ENCODE measurements at regions of chr13 and their contacts with region 1.

Region 1: DNA sequence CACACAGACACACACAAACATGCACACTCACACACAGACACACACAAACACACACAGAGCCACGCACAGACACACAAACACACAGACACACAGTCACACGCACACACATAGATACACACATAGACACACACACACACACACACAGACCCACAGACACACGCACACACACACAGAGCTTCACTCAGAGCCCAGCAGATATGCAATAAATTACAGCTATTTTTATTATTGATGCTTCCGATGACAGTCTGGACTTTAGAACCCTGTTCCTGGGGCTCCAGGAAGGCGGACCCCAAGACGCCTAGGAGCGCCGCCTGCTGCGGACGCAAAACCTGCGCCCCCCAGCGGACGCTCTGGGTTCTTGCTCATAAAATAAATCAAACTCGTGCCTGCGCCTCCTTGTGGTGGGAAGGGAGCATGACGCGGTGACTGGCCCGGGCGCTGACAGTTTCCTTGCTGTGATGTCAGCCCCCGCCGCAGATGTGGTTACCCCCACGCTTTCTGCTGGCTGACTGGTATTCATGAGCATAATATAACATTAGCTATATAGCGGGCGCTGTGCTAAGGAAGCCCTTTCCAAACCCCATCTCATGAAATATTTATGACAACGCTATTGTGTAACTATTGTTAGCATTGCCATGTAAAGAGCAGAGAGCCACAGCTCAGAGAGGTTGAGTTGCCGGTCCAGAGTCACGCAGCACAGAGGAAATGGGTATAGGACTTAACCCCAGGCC is 64.4 kb upstream of the TM9SF2 start:
- DNase-seq: peak; percentile 98
- H3K4me3 Mint-ChIP-seq: peak overlapping the region; percentile 23
- H3K27ac Mint-ChIP-seq: peak overlapping the region; percentile 69
- H3K4me1 Mint-ChIP-seq: peaks cover 64% of the 10 kb centered on the region
- H3K27me3 Mint-ChIP-seq: peaks cover 8% of the 10 kb centered on the region

Region 2: DNA sequence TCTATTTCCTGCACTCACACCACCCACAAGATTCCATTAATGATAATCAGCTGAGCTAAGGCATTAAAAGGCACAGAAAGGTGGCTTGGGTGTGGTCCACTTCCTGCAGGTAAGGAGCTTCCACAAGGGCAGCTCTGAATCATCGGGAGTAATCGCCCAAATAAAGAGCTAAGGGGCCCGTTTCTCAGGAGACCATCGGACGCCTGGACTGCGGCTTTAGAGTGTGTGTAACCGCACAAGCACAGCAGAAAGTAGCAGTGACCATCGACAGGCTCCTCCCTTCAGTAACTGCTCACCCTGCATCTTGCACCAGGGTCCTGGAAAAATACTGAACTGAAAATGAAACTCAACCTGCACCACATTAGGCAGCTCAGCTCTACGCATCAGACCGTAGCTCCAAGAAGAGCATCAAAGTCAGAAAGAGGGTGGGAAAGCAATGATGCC is 865.9 kb before region 1 on chr13:
- CTCF ChIA-PET with region 1: no interaction called
- POLR2A ChIA-PET with region 1: no interaction called
- intact Hi-C with region 1: loop called (anchors 5 kb)
- DNase-seq: peak; percentile 67
- H3K4me3 Mint-ChIP-seq: peak overlapping the region; percentile 75
- H3K27ac Mint-ChIP-seq: peak overlapping the region; percentile 98
- H3K4me1 Mint-ChIP-seq: peaks cover 89% of the 10 kb centered on the region
- H3K27me3 Mint-ChIP-seq: no peaks in the 10 kb centered on the region

Region 3: GRCh38 chr13:99200432-99201167 is 236.3 kb before region 1 on chr13 and contains the start of gene UBAC2:
- CTCF ChIA-PET with region 1: interaction called, 8 read pairs
- POLR2A ChIA-PET with region 1: no interaction called
- intact Hi-C with region 1: loop called (anchors 1 kb)
- DNase-seq: peak; percentile 97
- H3K4me3 Mint-ChIP-seq: peak within 1 kb of the TSS; percentile 90
- H3K27ac Mint-ChIP-seq: peak within 1 kb of the TSS; percentile 90
- H3K4me1 Mint-ChIP-seq: peaks cover 59% of the 10 kb centered on the region
- H3K27me3 Mint-ChIP-seq: no peaks in the 10 kb centered on the region
- total RNA-seq, gene UBAC2: 51.8 to 54.5 TPM

Region 4: DNA sequence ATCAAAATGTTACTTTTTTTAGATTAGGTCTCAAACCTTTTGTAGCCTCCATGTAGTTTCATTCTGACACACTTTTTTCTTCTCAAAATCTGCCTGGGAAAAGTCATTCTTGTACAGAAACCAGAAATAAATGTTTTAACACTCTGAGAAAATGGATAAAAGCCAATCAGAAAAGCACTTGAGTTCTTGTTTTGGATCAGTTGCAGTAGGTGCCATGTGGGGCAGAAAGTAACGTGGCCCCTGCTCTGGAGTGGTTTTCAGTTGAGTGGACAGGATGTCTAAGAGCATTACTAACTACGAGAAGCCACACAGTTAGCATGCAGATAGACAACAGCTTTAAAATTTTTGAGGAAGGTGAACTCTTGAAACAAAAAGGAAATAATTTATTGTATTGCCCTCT is 148.8 kb before region 1 on chr13:
- CTCF ChIA-PET with region 1: interaction called, 10 read pairs
- POLR2A ChIA-PET with region 1: no interaction called
- intact Hi-C with region 1: no loop called
- DNase-seq: peak; percentile 87
- H3K4me3 Mint-ChIP-seq: no peak overlapping the region
- H3K27ac Mint-ChIP-seq: peak overlapping the region; percentile 80
- H3K4me1 Mint-ChIP-seq: peaks cover 85% of the 10 kb centered on the region
- H3K27me3 Mint-ChIP-seq: no peaks in the 10 kb centered on the region

Region 5: GRCh38 chr13:99322297-99323103 is 114.4 kb before region 1 on chr13:
- CTCF ChIA-PET with region 1: interaction called, 18 read pairs
- POLR2A ChIA-PET with region 1: interaction called, 5 read pairs
- intact Hi-C with region 1: loop called (anchors 1 kb)
- DNase-seq: peak; percentile 53
- H3K4me3 Mint-ChIP-seq: peak overlapping the region; percentile 27
- H3K27ac Mint-ChIP-seq: peak overlapping the region; percentile 93
- H3K4me1 Mint-ChIP-seq: peaks cover 84% of the 10 kb centered on the region
- H3K27me3 Mint-ChIP-seq: no peaks in the 10 kb centered on the region

Region 6: DNA sequence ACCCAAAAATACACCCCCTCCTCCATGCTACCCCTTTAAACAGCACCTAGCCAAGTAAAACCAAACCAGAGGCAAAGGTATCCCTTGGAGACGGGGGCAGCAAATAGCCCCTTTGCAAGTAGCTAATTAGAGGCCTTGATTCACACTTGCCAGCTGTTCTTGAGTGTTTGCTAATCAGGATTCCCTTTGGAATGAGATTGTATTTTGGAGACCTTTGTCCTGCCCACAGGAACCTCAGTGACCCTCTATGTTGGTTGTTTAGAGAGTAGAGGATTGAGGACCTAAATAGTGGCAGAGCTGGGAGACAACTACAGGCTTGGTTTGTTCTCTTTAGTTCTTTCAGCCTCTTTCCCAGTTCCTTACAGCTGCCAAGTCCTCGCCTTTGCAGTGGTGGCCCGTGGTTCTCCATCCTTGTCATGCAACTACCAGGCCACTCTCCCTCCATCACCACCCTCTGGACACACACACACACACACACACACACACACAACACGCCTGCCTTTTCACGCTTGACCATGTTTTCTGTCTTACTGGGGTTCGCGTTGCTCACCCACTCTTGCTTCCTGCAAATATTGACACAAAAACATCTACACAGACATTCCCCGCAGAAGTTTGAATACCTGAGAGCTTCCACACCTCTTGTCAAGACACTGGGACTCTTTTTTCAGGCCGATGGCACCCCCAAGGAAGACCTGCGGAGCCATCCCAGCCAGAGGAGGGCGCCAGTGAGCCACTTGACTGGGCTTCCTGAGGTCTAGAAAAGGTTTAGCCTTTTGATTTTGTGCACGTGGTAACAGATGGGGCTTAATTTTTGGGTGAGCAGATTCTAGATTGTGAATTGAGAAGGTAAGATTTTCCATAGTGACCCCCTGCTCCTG is 49.7 kb before region 1 on chr13:
- CTCF ChIA-PET with region 1: interaction called, 290 read pairs
- POLR2A ChIA-PET with region 1: interaction called, 12 read pairs
- intact Hi-C with region 1: loop called (anchors 1 kb)
- DNase-seq: peak; percentile 92
- H3K4me3 Mint-ChIP-seq: no peak overlapping the region
- H3K27ac Mint-ChIP-seq: peak overlapping the region; percentile 61
- H3K4me1 Mint-ChIP-seq: peaks cover 64% of the 10 kb centered on the region
- H3K27me3 Mint-ChIP-seq: no peaks in the 10 kb centered on the region

Region 7: DNA sequence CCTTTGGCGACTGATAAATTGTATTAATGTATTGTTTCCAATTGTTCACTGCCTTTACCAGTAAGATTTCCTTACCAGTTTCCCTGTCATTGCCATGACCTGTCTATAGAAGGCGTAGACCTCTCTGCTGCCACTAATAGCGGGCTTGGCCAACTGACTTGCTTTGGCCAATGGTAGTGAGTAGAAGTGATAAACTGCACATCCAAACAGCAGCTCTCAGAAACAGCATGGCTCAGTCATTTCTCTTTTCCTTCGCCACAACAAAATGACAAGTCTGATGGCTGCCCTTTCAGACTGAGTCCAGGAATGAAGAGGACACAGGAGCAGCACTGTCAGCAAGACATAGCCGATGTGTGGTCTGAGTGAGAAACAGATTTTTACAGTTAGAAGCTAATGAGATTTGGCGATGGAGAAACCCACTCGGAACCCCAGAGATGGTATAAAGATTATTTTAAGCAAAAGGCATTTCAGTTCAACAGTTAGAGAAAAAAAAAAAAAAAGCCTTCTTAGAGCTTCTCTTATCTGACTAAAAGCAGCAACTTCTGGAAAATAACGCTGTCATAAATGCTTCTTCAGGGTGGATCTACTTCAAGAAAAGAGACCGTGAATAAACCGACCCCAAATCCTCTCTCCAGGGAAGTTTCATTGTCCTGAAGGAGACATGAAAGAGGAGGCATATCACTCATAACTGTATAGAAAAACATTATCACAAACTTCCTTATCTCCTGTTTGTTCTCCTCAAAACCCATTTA is 22.4 kb after region 1 on chr13:
- CTCF ChIA-PET with region 1: no interaction called
- POLR2A ChIA-PET with region 1: no interaction called
- intact Hi-C with region 1: no loop called
- DNase-seq: peak; percentile 36
- H3K4me3 Mint-ChIP-seq: no peak overlapping the region
- H3K27ac Mint-ChIP-seq: no peak overlapping the region
- H3K4me1 Mint-ChIP-seq: peaks cover 17% of the 10 kb centered on the region
- H3K27me3 Mint-ChIP-seq: peaks cover 5% of the 10 kb centered on the region

Region 8: DNA sequence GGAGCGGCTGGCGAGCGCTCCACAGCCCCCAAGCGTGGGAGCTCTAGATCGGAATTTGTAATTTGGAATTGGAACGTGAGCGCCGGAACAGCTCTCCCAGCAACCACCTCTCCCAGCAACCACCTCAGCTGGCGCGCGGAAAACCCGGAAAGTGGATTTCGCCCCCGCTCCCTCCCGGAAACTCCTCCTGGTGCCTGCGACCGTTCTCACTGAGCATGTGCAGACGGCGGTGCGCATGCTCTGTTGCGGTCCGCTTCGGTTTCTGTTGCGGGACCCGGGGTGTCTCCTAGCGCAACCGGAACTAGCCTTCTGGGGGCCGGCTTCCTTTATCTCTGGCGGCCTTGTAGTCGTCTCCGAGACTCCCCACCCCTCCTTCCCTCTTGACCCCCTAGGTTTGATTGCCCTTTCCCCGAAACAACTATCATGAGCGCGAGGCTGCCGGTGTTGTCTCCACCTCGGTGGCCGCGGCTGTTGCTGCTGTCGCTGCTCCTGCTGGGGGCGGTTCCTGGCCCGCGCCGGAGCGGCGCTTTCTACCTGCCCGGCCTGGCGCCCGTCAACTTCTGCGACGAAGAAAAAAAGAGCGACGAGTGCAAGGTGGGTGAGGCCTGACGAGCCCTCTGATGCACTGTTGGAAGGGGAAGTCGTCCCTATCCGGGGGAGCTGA is 64.5 kb after region 1 on chr13 and contains the start of gene TM9SF2:
- CTCF ChIA-PET with region 1: interaction called, 58 read pairs
- POLR2A ChIA-PET with region 1: interaction called, 4 read pairs
- intact Hi-C with region 1: loop called (anchors 1 kb)
- DNase-seq: peak; percentile 98
- H3K4me3 Mint-ChIP-seq: peak within 1 kb of the TSS; percentile 88
- H3K27ac Mint-ChIP-seq: peak within 1 kb of the TSS; percentile 88
- H3K4me1 Mint-ChIP-seq: peaks cover 67% of the 10 kb centered on the region
- H3K27me3 Mint-ChIP-seq: no peaks in the 10 kb centered on the region
- total RNA-seq, gene TM9SF2: 67.2 to 72.0 TPM

Measured in activated CD4-positive, alpha-beta memory T cell treated with anti-CD3 and anti-CD28 coated beads for 36 hours (primary cell).